ENCODE measurements at regions of chr7 and their contacts with region 1.

Region 1: DNA sequence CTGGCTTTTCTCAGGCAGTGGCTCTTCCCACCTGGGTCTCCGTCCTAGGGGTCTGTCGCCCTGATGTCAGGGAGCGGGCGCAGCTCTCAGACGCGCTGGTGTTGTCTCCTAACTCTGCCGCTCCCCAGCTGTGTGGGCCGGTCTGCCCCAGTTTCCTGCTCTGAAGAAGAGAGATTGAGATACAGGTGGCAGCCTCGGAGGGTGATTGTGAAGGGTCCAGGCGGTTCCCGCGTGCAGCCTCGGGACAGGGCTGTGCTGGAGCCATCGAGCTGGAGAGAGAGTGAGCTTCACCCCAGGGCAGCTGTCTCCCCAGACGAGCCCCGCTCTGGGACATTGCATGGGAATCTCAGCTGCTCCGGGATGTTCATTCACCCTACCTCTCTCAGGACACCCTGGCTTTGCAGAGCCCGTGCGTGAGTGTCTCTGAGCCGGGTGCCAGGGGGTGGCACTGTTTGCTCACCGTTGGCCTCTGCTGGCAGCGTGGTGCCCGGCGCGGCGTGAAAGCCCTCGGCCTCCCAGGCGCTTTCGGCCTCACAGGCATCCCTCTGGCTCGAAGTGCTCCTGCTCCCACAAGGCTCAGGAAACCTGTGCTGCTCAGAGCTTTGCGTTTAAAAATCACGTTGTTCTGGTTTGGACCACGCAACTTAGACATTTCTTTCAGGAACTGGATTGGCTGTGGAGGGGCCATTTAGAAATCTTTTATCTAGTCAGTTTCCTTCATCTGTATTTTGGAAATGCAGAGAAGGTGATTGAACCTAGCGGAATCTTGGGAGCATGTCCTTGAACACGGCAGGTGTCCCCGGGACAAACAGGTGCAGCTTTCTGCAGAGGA is 33.8 kb upstream of the ZFAND2A start:
- DNase-seq: peak; percentile 66
- ATAC-seq: peak; percentile 69
- H3K4me3 Mint-ChIP-seq: no peak overlapping the region
- H3K27ac Mint-ChIP-seq: no peak overlapping the region
- H3K4me1 Mint-ChIP-seq: peaks cover 22% of the 10 kb centered on the region
- H3K27me3 Mint-ChIP-seq: peaks cover 20% of the 10 kb centered on the region

Region 2: GRCh38 chr7:1059200-1060091 is 134.4 kb before region 1 on chr7:
- CTCF ChIA-PET with region 1: no interaction called
- DNase-seq: no peak
- ATAC-seq: peak; percentile 50
- H3K4me3 Mint-ChIP-seq: no peak overlapping the region
- H3K27ac Mint-ChIP-seq: no peak overlapping the region
- H3K4me1 Mint-ChIP-seq: peaks cover 6% of the 10 kb centered on the region
- H3K27me3 Mint-ChIP-seq: no peaks in the 10 kb centered on the region

Region 3: GRCh38 chr7:1169409-1170368 is 24.1 kb before region 1 on chr7:
- CTCF ChIA-PET with region 1: interaction called, 10 read pairs
- DNase-seq: peak; percentile 96
- ATAC-seq: peak; percentile 99
- H3K4me3 Mint-ChIP-seq: peak overlapping the region; percentile 80
- H3K27ac Mint-ChIP-seq: peak overlapping the region; percentile 95
- H3K4me1 Mint-ChIP-seq: peaks cover 14% of the 10 kb centered on the region
- H3K27me3 Mint-ChIP-seq: no peaks in the 10 kb centered on the region

Region 4: GRCh38 chr7:1175967-1176851 is 17.6 kb before region 1 on chr7:
- CTCF ChIA-PET with region 1: interaction called, 52 read pairs
- DNase-seq: peak; percentile 90
- ATAC-seq: peak; percentile 84
- H3K4me3 Mint-ChIP-seq: peak overlapping the region; percentile 51
- H3K27ac Mint-ChIP-seq: peak overlapping the region; percentile 87
- H3K4me1 Mint-ChIP-seq: peaks cover 14% of the 10 kb centered on the region
- H3K27me3 Mint-ChIP-seq: peaks cover 15% of the 10 kb centered on the region

Region 5: DNA sequence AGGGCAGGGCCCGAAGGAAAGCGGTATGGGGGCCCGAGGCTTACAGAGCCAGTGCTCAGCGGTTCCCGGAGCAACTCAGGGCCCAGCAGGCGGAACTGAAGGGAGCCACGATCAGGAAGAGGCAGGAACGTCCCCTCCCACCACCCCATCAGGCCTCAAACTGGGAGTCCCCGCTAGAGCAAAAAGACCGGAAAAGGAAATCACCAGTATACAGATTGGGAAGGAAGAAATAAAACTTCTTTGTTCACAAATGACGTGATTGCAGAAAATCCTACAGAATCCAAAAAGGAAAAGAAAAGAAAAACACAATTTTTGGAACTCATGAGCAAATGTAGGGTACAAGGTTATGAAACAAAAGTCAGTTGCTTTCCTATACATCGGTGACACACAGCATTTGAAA is 12.2 kb before region 1 on chr7:
- CTCF ChIA-PET with region 1: interaction called, 52 read pairs
- DNase-seq: no peak
- ATAC-seq: no peak
- H3K4me3 Mint-ChIP-seq: no peak overlapping the region
- H3K27ac Mint-ChIP-seq: no peak overlapping the region
- H3K4me1 Mint-ChIP-seq: peaks cover 9% of the 10 kb centered on the region
- H3K27me3 Mint-ChIP-seq: peaks cover 41% of the 10 kb centered on the region

Region 6: GRCh38 chr7:1409555-1409954 is 215.7 kb after region 1 on chr7:
- CTCF ChIA-PET with region 1: interaction called, 11 read pairs
- DNase-seq: no peak
- ATAC-seq: no peak
- H3K4me3 Mint-ChIP-seq: no peak overlapping the region
- H3K27ac Mint-ChIP-seq: no peak overlapping the region
- H3K4me1 Mint-ChIP-seq: peaks cover 3% of the 10 kb centered on the region
- H3K27me3 Mint-ChIP-seq: peaks cover 8% of the 10 kb centered on the region

Region 7: DNA sequence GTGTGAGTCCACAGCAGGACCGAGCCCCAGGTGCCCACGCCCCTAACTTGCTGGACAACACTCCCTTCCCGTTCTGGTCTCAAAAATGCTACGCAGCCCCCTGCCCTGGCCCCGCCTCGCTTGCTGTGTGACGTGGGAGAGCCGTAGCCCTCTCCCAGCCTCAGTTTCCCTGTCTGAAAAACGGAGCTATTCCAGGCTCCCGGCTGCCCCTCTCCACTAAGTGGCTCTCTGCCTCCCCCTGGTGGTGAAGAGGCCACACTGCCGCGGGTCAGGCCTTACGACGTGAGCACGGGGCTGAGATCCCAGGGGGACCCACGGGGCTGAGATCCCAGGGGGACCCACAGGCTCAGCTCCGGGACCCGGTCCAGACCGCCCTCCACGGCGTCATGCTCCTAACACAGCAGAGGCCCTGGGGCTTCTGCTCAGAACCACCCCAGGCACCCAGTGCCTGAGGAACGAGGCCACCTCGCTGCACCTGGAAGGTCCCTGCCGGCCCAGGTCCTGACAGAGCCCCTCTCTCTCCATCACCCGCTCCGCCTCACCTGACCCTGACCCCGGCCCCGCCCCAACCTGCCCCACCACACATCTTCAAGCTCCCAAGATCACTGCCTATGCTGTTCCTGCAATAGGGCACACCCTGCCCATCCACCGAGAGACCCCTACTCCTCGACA is 238.7 kb after region 1 on chr7:
- CTCF ChIA-PET with region 1: interaction called, 28 read pairs
- DNase-seq: peak; percentile 83
- ATAC-seq: peak; percentile 84
- H3K4me3 Mint-ChIP-seq: no peak overlapping the region
- H3K27ac Mint-ChIP-seq: no peak overlapping the region
- H3K4me1 Mint-ChIP-seq: peaks cover 2% of the 10 kb centered on the region
- H3K27me3 Mint-ChIP-seq: peaks cover 5% of the 10 kb centered on the region

Region 8: DNA sequence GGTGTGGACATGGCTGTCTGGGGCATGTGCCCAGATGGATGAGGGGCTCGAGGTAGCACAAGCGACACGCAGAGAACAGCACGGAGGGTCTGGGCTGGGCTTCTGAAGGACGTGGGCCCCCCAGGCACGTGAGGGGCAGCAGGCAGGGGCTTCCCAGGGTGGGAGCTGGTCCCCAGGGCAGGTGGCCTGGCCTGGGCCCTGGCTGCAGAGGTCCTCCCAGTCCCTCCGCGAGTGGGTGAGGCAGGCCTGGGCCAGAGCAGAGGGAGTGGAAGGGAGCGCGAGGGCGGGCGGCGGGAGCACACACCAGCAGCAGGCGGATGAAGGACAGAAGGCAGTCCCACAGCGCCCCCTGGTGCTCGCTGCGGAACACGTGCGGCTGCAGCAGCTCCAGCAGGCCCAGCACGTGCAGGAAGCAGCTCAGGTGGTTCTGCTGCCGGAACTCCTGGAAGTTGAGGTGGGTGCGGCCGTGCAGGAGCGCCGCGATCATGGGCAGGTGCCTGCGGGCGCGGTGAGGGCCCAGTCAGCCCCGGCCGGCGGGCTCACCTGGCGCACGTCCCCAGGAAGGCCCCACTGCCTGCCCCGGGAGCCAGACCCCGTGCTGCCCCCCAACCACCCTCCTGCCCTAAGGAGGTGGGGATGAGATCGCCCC is 280.2 kb after region 1 on chr7:
- CTCF ChIA-PET with region 1: interaction called, 14 read pairs
- DNase-seq: peak; percentile 91
- ATAC-seq: peak; percentile 89
- H3K4me3 Mint-ChIP-seq: no peak overlapping the region
- H3K27ac Mint-ChIP-seq: no peak overlapping the region
- H3K4me1 Mint-ChIP-seq: peaks cover 11% of the 10 kb centered on the region
- H3K27me3 Mint-ChIP-seq: no peaks in the 10 kb centered on the region

Measured in activated CD8-positive, alpha-beta memory T cell treated with anti-CD3 and anti-CD28 coated beads, Interleukin-2, amount 10 ng/mL, durations not matched to agents 7 days and 5 days (primary cell).